ENCODE measurements at regions of chr1 and their contacts with region 1.

Region 1: GRCh38 chr1:53945433-53946251 is at the start of gene IFT25:
- DNase-seq: peak; percentile 95
- H3K4me3 Mint-ChIP-seq: peak within 1 kb of the TSS; percentile 90
- H3K27ac Mint-ChIP-seq: peak within 1 kb of the TSS; percentile 89
- H3K4me1 Mint-ChIP-seq: peaks cover 61% of the 10 kb centered on the region
- H3K27me3 Mint-ChIP-seq: no peaks in the 10 kb centered on the region
- total RNA-seq, gene IFT25: 50.2 and 52.6 TPM in 2 replicates

Region 2: GRCh38 chr1:53196485-53197270 is 749.0 kb before region 1 on chr1 and contains the start of gene CPT2:
- intact Hi-C with region 1: loop called (anchors 2 kb)
- DNase-seq: peak; percentile 92
- H3K4me3 Mint-ChIP-seq: peak within 1 kb of the TSS; percentile 95
- H3K27ac Mint-ChIP-seq: peak within 1 kb of the TSS; percentile 92
- H3K4me1 Mint-ChIP-seq: peaks cover 28% of the 10 kb centered on the region
- H3K27me3 Mint-ChIP-seq: no peaks in the 10 kb centered on the region
- total RNA-seq, gene CPT2: 18.5 and 19.4 TPM in 2 replicates

Region 3: DNA sequence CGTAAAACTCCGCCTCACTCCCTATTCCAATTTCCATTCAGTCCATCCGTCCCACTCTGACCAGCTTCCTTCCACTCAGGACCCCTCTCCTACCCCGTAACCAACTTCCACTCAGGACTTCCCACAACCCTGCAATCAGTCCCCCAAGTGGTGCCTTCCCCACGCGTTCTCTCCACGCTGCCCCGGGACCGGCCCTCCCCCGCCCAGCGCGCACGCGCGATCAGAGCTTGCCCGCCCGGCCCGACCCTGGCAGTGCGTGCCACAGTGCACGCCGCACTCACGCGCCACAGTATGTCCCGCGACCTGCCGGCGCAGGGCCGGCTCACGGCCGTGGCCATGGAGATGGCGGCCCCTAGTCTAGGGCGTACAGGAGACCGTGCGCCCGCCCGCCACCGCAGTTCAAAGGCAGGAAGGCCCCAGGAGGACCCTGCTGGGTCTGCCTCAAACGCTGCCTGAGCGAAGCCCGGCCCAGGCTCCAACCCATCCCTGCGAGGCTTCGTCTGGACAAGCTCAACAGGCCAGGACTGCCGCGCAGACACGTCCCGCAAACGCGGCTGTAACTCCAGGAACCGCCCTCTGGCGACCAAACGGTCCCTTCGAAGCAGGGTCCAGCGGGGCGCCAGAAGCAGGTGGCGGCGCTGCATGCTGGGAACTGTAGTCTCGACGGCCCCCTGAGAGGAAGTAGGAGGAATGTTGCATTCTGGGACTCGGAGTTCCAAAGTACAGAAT is 107.6 kb before region 1 on chr1 and contains the start of gene NDC1:
- intact Hi-C with region 1: loop called (anchors 1 kb)
- DNase-seq: peak; percentile 86
- H3K4me3 Mint-ChIP-seq: peak within 1 kb of the TSS; percentile 100
- H3K27ac Mint-ChIP-seq: peak within 1 kb of the TSS; percentile 98
- H3K4me1 Mint-ChIP-seq: peaks cover 26% of the 10 kb centered on the region
- H3K27me3 Mint-ChIP-seq: peaks cover 4% of the 10 kb centered on the region
- total RNA-seq, gene NDC1: 33.2 and 38.2 TPM in 2 replicates

Region 4: DNA sequence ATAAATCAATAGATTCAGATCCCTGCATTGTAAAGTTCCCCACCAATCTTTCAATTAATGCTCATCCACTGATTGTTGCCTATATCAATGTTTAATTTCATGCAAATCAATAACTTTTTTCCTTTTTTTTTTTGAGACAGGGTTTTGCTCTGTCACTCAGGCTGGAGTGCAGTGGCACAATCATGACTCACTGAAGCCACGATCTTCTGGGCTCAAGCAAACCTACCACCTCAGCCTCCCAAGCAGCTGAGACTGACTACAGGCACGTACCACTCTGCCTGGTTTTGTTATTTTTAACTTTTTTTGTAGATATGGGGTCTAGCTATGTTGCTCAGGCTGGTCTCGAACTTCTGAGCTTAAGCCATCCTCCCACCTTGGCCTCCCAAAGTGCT is 26.0 kb before region 1 on chr1:
- intact Hi-C with region 1: loop called (anchors 2 kb)
- DNase-seq: no peak
- H3K4me3 Mint-ChIP-seq: no peak overlapping the region
- H3K27ac Mint-ChIP-seq: peak overlapping the region; percentile 90
- H3K4me1 Mint-ChIP-seq: peaks cover 48% of the 10 kb centered on the region
- H3K27me3 Mint-ChIP-seq: no peaks in the 10 kb centered on the region

Region 5: DNA sequence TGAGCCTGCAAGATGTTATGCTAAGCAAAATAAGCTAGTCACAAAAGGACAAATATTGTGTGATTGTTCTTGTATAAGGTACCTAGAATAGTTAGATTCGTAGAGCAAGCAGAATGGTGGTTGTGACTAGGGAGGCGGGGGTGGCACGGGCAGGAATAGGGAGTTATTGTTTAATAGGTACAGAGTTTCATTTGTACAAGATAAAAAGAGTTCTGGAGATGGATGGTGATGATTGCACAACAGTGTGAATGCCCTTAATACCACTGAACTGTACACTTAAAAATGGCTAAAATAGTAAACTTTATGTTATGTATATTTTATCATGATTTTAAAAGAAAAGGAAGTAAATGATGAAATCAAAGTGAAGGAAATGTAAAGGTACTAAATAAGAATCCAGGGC is 21.2 kb after region 1 on chr1:
- intact Hi-C with region 1: no loop called
- DNase-seq: no peak
- H3K4me3 Mint-ChIP-seq: no peak overlapping the region
- H3K27ac Mint-ChIP-seq: no peak overlapping the region
- H3K4me1 Mint-ChIP-seq: peaks cover 2% of the 10 kb centered on the region
- H3K27me3 Mint-ChIP-seq: no peaks in the 10 kb centered on the region

Region 6: DNA sequence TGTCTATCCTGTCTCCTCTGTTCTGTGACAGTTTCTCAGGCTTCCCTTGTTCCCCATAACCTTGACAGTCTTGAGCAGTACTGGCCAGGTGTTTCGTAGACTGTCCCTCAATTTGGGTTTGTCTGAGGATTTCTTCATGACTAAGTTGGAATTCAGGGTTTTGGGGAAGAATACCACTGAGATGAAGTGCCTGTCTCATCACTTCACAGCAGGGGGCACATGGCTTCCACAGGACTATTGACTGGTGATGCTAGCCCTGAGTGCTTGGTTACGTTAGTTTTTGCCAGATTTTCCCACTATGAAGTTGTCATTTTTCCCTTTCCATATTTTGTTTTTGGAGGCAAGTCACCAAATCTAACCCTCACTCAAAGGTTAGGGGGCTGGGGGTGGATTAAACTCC is 161.5 kb after region 1 on chr1:
- intact Hi-C with region 1: no loop called
- DNase-seq: no peak
- H3K4me3 Mint-ChIP-seq: no peak overlapping the region
- H3K27ac Mint-ChIP-seq: no peak overlapping the region
- H3K4me1 Mint-ChIP-seq: no peaks in the 10 kb centered on the region
- H3K27me3 Mint-ChIP-seq: no peaks in the 10 kb centered on the region

Region 7: GRCh38 chr1:54287176-54287650 is 341.6 kb after region 1 on chr1:
- intact Hi-C with region 1: loop called (anchors 1 kb)
- DNase-seq: peak; percentile 79
- H3K4me3 Mint-ChIP-seq: peak overlapping the region; percentile 81
- H3K27ac Mint-ChIP-seq: peak overlapping the region; percentile 98
- H3K4me1 Mint-ChIP-seq: peaks cover 89% of the 10 kb centered on the region
- H3K27me3 Mint-ChIP-seq: no peaks in the 10 kb centered on the region

Region 8: GRCh38 chr1:54886724-54887664 is 941.4 kb after region 1 on chr1 and contains the start of gene DHCR24:
- intact Hi-C with region 1: loop called (anchors 2 kb)
- DNase-seq: peak; percentile 85
- H3K4me3 Mint-ChIP-seq: peak within 1 kb of the TSS; percentile 96
- H3K27ac Mint-ChIP-seq: peak within 1 kb of the TSS; percentile 87
- H3K4me1 Mint-ChIP-seq: peaks cover 56% of the 10 kb centered on the region
- H3K27me3 Mint-ChIP-seq: peaks cover 10% of the 10 kb centered on the region
- total RNA-seq, gene DHCR24: 206 and 211 TPM in 2 replicates

Region 9: DNA sequence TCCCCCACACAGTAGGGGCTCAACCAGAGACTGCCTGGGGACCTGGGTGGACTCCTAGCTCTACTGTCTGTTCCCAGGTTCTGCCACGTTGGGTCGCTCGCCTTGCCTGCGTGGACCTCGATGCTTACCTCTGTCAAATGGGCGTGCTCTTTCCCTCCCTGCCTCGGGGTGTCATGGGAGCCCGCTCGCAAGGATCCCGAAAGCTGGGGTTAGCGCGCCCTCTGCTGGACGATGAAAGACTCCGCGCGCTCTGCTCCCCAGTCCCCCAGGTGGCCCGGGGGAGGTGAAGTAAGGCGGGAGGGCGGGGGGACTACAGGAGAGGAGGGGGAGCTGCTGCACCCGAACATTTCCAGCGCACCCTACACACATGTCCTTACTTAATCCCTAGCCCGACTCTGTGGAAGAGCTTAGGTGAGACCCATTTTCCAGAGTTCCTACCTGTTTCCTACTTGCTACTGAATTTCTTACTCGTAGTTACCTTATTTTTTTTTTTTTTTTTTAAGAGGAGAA is 1050.8 kb after region 1 on chr1:
- intact Hi-C with region 1: no loop called
- DNase-seq: peak; percentile 70
- H3K4me3 Mint-ChIP-seq: peak overlapping the region; percentile 19
- H3K27ac Mint-ChIP-seq: no peak overlapping the region
- H3K4me1 Mint-ChIP-seq: peaks cover 19% of the 10 kb centered on the region
- H3K27me3 Mint-ChIP-seq: peaks cover 27% of the 10 kb centered on the region

Measured in activated T-helper 1 cell treated with anti-CD3 and anti-CD28 coated beads, Interleukin-12 subunit alpha, Interleukin-12 subunit beta, Interleukin-2, Interleukin-4 antibody, amounts not matched to agents 30 ng/mL and 10 ng/mL and 1 ng/mL, durations not matched to agents 14 hours and 24 hours and 36 hours (primary cell).